HepG2 (cell line): ENCODE measurements at regions of chr13 and their contacts with region 1.

Region 1: GRCh38 chr13:29595380-29596063 is at the start of gene SLC7A1:
- DNase-seq: peak; percentile 70
- ATAC-seq: peak; percentile 91
- H3K4me3 ChIP-seq: peak within 1 kb of the TSS; percentile 78 to 81 (median 80)
- H3K27ac ChIP-seq: peak within 1 kb of the TSS; percentile 77
- H3K4me1 ChIP-seq: peaks cover 44% of the 10 kb centered on the region
- H3K27me3 ChIP-seq: peaks cover 0 to 4% of the 10 kb centered on the region in 2 experiments; a peak in 2 of 5 replicates
- CTCF ChIP-seq: no peak
- EP300 ChIP-seq: no peak
- POLR2A ChIP-seq: peak; percentile 66 to 70
- RAD21 ChIP-seq: 0 out of 2 replicates have a peak, but pooled peaks have one; percentile 12
- total RNA-seq, gene SLC7A1: 13.6 and 14.5 TPM in 2 replicates

Region 2: DNA sequence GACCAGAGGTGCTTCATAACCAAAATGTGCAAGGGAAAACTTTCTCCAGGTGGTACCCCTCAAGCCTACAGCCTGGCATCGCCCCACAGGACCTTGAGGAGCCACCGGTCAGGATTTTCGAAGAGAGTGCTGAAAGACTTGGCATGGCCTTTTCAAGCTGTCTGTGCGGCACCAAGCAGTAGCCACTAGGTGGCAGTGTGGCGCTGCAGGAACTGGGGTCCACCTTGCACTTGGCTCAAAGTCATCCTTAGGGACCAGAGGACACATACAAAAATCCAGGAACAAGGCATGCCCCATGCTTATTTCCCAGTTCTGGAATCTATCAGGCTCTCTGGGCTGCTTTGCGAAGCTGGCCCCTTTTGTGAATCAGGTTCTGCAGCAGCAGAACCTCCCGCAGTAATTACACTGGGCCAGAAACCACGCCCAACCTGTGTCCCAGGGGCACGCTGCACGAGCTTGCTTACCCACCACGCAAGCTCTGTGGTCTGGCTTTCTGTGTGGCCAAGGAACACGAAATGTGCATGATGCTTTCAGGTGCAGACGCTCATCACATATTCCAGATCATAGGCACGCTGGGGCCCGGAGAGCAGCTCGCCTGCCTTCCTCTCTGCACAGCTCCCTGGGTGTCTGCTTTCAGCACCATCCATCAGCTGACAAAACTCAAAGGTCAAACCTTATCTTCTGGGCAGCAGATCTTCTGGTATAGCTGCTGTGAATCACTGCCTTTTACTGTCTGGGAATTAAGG is 87.2 kb before region 1 on chr13:
- CTCF ChIA-PET with region 1: no interaction called
- POLR2A ChIA-PET with region 1: no interaction called
- in situ Hi-C with region 1: no loop called
- intact Hi-C with region 1: loop called (anchors 10 kb)
- DNase-seq: peak; percentile 60
- ATAC-seq: peak; percentile 88
- H3K4me3 ChIP-seq: no peak overlapping the region
- H3K27ac ChIP-seq: no peak overlapping the region
- H3K4me1 ChIP-seq: peaks cover 12% of the 10 kb centered on the region
- H3K27me3 ChIP-seq: peaks cover 0 to 10% of the 10 kb centered on the region in 2 experiments; a peak in 1 of 5 replicates
- CTCF ChIP-seq: peak; percentile 94
- EP300 ChIP-seq: no peak
- POLR2A ChIP-seq: no peak
- RAD21 ChIP-seq: peak; percentile 75

Region 3: GRCh38 chr13:29702912-29703351 is 107.4 kb after region 1 on chr13:
- CTCF ChIA-PET with region 1: no interaction called
- POLR2A ChIA-PET with region 1: no interaction called
- in situ Hi-C with region 1: no loop called
- intact Hi-C with region 1: no loop called
- DNase-seq: no peak
- ATAC-seq: peak; percentile 31; the same call in 1 of the 3 replicates
- H3K4me3 ChIP-seq: no peak overlapping the region
- H3K27ac ChIP-seq: no peak overlapping the region
- H3K4me1 ChIP-seq: no peaks in the 10 kb centered on the region
- H3K27me3 ChIP-seq: peaks cover 1 to 5% of the 10 kb centered on the region in 2 experiments; a peak in 2 of 5 replicates
- CTCF ChIP-seq: no peak
- EP300 ChIP-seq: no peak
- POLR2A ChIP-seq: no peak
- RAD21 ChIP-seq: no peak

Region 4: DNA sequence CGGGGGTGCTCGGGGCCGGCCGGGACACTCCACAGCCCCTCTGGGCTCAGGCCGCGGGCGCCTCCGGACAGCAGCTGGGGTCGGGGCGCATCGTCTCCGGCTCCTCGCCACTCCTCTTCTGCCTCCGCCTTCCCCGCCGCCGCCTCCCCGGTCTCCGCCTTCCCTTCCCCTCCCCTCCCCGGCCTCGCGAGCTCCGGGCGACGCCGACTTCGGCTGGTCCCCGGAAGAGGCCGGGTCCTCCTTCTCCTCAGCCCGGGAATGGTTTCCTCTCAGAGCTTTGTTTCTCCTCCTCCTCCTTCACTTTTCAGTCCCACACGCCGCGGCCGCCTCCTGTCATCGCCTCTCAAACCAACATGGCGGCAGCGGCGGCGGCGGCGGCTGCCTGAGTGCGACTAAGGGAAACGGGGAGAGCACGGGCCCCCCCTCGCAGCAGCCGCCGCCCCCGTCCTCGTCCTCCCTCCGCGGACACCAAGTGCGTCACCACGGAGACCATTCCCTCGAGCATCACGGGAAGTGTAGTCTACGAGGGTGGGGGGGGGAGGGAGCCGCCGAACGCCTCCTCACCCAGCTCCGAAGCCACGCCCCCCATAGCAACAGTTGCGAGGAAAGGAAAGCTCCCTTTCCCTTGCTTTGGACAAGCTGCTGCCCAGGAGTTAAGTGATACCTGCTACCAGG is 254.8 kb after region 1 on chr13 and contains the start of gene UBL3:
- CTCF ChIA-PET with region 1: no interaction called
- POLR2A ChIA-PET with region 1: no interaction called
- in situ Hi-C with region 1: loop called (anchors 10 kb)
- intact Hi-C with region 1: no loop called
- DNase-seq: peak; percentile 90
- ATAC-seq: peak; percentile 85
- H3K4me3 ChIP-seq: peak within 1 kb of the TSS; percentile 65 to 96 (median 85)
- H3K27ac ChIP-seq: peak within 1 kb of the TSS; percentile 81
- H3K4me1 ChIP-seq: peaks cover 21% of the 10 kb centered on the region
- H3K27me3 ChIP-seq: no peaks in the 10 kb centered on the region; a peak in 1 of 5 replicates
- CTCF ChIP-seq: 0 out of 2 replicates have a peak, but pooled peaks have one; percentile 14
- EP300 ChIP-seq: peak in 1 of 2 experiments; percentile 15; a peak in 1 of 4 replicates
- POLR2A ChIP-seq: peak; percentile 46 to 64; a peak in 3 of 4 replicates
- RAD21 ChIP-seq: no peak
- total RNA-seq, gene UBL3: 7.4 and 10.9 TPM in 2 replicates

Region 5: DNA sequence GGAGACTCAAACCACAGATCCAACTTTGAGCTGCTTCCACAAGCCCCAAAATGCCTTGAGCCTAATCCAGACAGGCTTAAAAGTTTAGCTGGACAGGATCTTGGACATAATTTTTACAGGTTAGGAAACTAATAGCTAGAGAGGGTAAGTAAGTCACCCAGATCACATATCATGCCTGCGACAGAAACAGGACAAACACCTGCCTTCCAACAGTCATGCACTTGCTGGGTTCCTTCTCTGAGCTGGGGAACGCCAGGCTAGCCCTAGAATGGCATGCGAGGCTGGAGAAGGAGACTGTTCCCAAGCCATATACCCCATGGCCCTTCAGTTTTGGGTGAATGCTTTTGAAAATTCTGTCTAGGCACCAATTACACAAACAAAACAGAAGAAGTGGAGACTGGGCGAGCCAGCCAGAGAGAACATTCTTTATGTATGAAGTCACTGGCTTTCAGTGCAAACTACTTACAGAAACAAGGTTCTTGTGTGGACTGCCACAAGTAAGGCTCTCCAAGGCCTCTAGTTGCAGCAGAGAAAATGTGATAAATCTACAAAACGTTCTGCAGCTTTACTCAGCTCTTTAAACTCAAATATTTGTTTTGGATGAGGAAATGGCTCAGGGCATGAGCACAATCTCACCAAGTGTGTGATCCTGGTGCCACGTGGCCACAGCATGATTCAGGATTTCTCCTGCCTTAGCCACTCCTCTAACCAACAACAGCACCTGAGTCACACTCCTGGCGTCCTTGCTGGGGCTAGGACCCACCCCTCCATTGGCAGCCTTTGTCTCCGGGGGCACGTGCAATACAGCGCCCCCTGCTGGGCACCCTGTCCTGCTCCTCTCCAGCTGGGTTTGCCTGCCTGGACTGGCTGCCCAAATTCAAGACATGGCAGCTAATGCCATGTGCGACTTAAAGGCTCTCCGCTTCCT is 328.3 kb after region 1 on chr13:
- CTCF ChIA-PET with region 1: no interaction called
- POLR2A ChIA-PET with region 1: no interaction called
- in situ Hi-C with region 1: no loop called
- intact Hi-C with region 1: loop called (anchors 2 kb)
- DNase-seq: peak; percentile 99
- ATAC-seq: peak; percentile 96
- H3K4me3 ChIP-seq: peak overlapping the region; percentile 22 to 65 (median 34); a peak in 4 of 6 replicates
- H3K27ac ChIP-seq: peak overlapping the region; percentile 81
- H3K4me1 ChIP-seq: peaks cover 67% of the 10 kb centered on the region
- H3K27me3 ChIP-seq: no peaks in the 10 kb centered on the region
- CTCF ChIP-seq: peak; percentile 93
- EP300 ChIP-seq: peak in 1 of 2 experiments; percentile 91; a peak in 2 of 4 replicates
- POLR2A ChIP-seq: peak in 1 of 2 experiments; percentile 75; a peak in 2 of 4 replicates
- RAD21 ChIP-seq: peak; percentile 90